ENCODE measurements at regions of chr4 and their contacts with region 1.

Region 1: DNA sequence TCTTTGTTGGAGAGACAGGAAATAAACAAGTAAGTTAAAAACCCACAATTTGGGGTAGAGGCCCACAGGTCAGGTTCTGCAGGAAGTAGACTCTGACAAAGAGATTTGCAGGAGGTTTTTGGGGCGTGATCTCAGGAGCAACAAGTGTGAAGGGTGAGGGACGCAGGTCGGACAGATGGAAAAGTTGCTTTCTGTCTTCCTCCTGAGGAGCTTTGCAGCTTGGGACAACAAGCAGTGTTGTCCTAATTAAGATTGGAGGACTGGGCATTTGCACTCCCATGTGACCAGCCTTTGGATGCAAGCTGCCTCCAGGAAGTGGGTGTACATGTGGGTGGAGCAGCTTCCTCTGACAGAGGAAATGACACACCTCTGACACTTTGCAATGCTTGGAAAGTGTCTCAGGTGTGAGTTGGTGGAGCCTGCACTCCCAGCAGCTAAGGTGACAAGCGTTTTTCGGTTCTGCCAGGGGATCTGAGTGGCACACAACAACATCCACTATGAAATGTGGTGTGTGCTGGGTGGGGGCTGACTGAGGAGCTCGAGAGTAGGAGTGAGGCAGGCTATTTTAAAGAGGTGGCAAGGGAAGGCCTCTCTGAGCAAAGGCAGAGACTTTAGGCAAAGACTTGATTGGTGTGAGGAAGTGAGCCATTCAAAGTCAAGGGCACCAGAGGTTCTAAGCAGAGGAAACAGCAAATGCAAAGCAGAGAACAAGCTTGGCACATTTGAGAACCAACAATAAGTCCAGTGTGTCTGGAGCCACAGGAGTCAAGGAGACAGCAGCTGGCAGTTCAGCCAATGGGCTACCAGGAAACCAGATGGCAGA is 339.8 kb upstream of the GATB start:
- DNase-seq: no peak

Region 2: GRCh38 chr4:152009983-152010709 is 90.4 kb before region 1 on chr4:
- intact Hi-C with region 1: loop called (anchors 5 kb)
- DNase-seq: no peak